Posterior vena cava (tissue), 2 donors: ENCODE measurements at regions of chr17 and their contacts with region 1.

Region 1: GRCh38 chr17:51153210-51154072 is at the start of gene NME1:
- DNase-seq: peak; percentile 98
- total RNA-seq, gene NME1: 48.8 to 61.3 TPM

Region 2: DNA sequence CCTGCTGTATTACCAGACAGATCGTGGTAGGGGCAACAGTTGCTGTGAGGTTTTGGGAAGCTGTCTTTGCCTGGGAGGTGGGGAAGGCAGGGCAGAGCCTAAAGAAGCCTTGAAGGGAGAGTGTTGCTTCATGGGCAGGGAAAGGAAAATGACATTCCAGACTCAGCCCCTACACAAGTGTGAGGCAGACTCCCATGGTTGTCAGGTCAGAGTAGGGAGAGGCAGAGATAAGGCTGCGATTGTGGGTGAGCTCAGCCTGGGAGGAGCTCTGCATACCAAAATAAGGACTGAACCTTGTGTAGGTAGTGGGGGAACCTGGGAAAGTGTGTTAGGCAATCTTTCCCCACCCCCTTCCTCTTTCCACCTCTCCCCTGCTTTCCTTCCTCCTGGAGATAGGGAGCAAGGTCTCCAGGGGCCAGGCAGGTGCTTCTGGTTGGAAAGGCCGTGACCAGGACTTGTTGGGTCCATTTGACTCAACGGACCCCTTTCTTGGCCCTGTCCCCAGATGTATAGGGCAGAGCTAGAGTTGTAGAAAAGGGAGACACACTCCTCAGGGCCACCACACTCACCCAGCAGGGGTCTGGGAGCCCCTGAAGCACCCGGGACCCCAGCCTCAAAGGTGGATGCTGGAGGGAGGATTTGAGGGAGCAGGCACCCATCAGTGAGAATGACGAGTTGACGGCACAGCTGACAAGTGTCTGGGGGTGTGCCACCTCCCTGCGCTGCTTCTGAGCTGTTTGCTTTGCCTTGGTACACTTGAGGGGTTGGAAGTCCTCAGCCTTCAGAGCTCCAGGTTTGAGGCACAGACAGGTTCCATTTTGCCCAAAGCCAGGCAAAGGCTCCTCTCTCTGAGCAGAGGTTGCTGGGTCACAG is 268.8 kb before region 1 on chr17:
- intact Hi-C with region 1: loop called in 1 of 2 experiments (anchors 5 kb)
- DNase-seq: no peak

Region 3: DNA sequence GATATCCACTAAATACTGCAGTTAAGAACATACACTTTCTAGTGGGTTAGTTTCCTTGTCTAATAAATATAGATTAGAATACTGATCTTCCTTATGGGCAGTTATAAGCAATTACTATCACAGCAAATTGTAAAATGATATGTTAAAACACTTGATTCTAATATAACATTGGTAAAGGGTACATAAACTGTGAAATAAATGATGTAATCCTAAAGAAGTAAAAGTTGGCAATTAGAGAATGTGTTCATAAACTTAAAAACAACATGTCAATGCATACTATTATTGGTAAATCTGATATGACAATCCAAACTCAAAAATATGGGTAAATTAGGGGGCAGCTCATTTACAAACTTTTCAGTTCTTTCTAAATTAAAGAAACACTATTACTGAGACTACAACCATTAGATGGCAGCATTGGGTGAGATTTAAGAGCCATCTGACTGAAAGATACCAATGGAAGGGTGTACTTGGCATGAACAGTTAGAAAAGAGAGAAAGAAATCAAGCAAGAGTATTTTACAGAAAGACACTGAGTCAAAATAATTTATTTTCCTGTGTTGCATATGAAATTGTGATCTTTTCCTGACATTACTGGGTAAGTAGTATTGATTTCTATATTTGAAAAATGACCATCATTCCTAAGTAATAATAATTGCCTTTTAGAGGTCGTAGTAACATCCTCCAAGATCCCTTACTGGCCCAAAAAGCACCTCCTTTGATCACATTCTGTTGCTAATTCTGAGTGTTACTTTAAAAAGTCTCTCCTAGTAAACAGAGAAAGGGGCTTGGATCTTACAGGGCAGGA is 152.4 kb before region 1 on chr17:
- intact Hi-C with region 1: loop called in 1 of 2 experiments (anchors 10 kb)
- DNase-seq: no peak